ENCODE measurements at regions of chr9 and their contacts with region 1.

Region 1: DNA sequence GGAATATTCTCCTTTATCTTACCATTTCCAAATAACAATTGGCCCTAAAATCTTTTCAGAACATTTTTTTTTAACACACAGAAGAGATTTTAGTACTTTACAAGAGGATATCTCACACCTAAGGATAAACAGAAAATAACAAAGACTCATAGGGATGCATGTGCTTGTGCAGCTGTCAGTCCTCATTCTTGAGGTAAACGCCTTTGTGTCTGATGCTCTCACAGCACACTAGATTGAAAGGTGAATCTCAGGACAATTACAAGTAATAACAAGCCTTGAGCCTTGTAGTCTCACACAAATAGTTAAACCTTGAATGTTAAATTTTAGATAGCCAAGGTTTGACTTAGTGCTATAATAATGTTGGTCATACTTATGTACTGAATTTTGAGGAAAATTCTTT is 439.2 kb downstream of the PTPRD start:
- DNase-seq: no peak
- ATAC-seq: no peak
- H3K4me3 ChIP-seq: no peak overlapping the region
- H3K27ac ChIP-seq: no peak overlapping the region
- H3K4me1 ChIP-seq: no peaks in the 10 kb centered on the region
- H3K27me3 ChIP-seq: no peaks in the 10 kb centered on the region
- CTCF ChIP-seq: no peak
- POLR2A ChIP-seq: no peak
- RAD21 ChIP-seq: no peak

Region 2: DNA sequence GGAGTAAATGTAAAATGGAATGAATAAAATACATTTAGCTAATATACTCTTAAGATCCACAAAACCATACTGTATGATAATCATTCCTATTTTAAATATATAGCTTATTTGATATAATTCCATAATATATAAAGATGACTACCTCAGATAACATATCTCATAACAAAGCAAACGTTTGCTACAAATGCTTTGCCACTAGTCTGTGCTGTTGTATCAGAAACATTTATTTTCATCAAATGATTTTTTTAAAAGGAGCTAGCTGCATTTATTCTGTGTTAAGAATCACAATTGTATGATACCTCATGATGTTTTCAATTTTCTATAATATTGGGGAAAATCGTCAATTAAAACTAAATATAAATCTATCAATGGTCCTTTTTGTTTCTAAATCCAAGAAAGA is 128.0 kb before region 1 on chr9:
- CTCF ChIA-PET with region 1: no interaction called
- POLR2A ChIA-PET with region 1: no interaction called
- RAD21 ChIA-PET with region 1: no interaction called
- intact Hi-C with region 1: no loop called
- DNase-seq: no peak
- ATAC-seq: no peak
- H3K4me3 ChIP-seq: no peak overlapping the region
- H3K27ac ChIP-seq: no peak overlapping the region
- H3K4me1 ChIP-seq: no peaks in the 10 kb centered on the region
- H3K27me3 ChIP-seq: no peaks in the 10 kb centered on the region
- CTCF ChIP-seq: no peak
- POLR2A ChIP-seq: no peak
- RAD21 ChIP-seq: no peak

Region 3: GRCh38 chr9:10127867-10128266 is 45.7 kb before region 1 on chr9:
- CTCF ChIA-PET with region 1: no interaction called
- POLR2A ChIA-PET with region 1: no interaction called
- RAD21 ChIA-PET with region 1: no interaction called
- intact Hi-C with region 1: loop called (anchors 10 kb)
- DNase-seq: no peak
- ATAC-seq: no peak
- H3K4me3 ChIP-seq: no peak overlapping the region
- H3K27ac ChIP-seq: no peak overlapping the region
- H3K4me1 ChIP-seq: no peaks in the 10 kb centered on the region
- H3K27me3 ChIP-seq: no peaks in the 10 kb centered on the region
- CTCF ChIP-seq: no peak
- POLR2A ChIP-seq: no peak
- RAD21 ChIP-seq: no peak